Right cardiac atrium (tissue), 5 donors: ENCODE measurements at regions of chr2 and their contacts with region 1.

Region 1: DNA sequence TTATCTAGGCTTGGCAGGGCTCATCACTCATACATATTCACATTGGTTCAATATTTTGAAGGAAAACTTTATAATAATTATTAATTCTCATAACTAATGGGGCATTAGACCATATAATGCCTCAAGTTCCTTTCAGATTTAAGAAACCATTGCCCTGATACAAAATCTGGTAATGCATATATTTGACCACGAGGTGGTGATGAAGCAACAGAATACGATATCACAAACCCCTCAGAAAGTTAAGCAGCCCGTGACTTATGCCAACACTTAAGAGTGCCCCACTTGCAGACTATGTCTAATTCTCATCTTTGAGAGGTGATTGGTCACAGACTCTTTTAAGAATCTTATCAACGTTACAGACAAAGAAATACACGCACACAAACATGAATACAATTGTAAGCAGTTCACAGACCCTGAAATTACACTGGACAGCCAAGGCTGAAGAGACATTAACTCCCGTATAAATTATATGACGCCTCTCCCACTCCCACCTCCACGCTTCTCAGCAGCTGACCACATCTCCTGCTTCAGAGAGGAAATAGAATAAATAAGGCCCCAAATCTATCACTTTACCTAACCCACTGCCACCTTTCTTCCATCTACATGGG is 20.7 kb upstream of the DNAH6 start:
- DNase-seq: no peak
- ATAC-seq: peak; percentile 75 to 84
- H3K4me3 ChIP-seq: no peak overlapping the region
- H3K27ac ChIP-seq: no peak overlapping the region
- H3K4me1 ChIP-seq: no peaks in the 10 kb centered on the region
- H3K27me3 ChIP-seq: no peaks in the 10 kb centered on the region

Region 2: GRCh38 chr2:84631047-84631446 is 135.4 kb after region 1 on chr2:
- intact Hi-C with region 1: loop called in 3 of 4 experiments (anchors 5 to 10 kb)
- DNase-seq: no peak
- ATAC-seq: peak; percentile 49 to 63
- H3K4me3 ChIP-seq: no peak overlapping the region
- H3K27ac ChIP-seq: no peak overlapping the region
- H3K4me1 ChIP-seq: no peaks in the 10 kb centered on the region
- H3K27me3 ChIP-seq: no peaks in the 10 kb centered on the region

Region 3: DNA sequence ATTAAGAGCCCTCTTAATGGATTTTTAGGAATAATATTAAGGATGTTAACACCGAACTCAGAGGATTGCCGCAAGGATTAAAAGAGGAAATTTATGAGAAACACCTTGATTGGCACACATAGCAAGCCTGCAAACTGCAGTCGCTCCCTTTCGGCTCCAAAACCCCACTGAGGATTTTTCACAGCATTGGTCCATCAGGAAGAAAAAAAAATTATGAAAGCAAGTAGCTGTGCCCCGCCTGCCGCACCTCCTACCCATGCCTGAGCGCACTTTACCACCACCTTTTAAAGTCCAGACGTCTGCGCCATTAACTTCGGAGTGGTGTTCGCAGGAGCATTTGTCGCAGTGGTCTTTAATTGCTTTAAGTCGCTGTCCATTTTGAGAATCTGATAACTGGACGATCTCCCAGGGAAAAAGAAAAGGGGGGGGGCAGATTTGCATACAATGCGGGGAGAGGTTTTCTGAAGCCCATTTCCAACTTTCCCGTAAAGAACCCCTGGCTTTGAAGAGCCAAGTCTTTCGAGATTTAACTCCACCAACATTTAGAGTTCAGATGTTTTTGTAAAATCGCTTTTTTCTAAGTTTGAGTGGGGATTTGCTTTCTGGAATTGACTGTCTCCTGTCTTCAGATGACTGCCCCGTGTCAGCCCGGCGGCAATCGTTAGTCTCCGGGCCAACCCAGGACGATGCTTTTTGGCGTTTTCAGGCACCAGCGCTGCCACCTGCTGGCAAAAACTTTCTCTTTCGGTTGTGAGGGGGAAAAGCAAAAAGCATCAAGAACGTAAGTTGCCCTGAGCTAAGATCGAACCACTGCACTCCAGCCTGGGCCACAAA is 386.2 kb after region 1 on chr2:
- intact Hi-C with region 1: loop called (anchors 5 to 10 kb)
- DNase-seq: peak; percentile 79 to 90 (median 83)
- ATAC-seq: peak; percentile 78 to 87
- H3K4me3 ChIP-seq: peak overlapping the region; percentile 54
- H3K27ac ChIP-seq: no peak overlapping the region
- H3K4me1 ChIP-seq: peaks cover 5% of the 10 kb centered on the region
- H3K27me3 ChIP-seq: no peaks in the 10 kb centered on the region